GM10248 (cell line): ENCODE measurements at regions of chrX and their contacts with region 1.

Region 1: DNA sequence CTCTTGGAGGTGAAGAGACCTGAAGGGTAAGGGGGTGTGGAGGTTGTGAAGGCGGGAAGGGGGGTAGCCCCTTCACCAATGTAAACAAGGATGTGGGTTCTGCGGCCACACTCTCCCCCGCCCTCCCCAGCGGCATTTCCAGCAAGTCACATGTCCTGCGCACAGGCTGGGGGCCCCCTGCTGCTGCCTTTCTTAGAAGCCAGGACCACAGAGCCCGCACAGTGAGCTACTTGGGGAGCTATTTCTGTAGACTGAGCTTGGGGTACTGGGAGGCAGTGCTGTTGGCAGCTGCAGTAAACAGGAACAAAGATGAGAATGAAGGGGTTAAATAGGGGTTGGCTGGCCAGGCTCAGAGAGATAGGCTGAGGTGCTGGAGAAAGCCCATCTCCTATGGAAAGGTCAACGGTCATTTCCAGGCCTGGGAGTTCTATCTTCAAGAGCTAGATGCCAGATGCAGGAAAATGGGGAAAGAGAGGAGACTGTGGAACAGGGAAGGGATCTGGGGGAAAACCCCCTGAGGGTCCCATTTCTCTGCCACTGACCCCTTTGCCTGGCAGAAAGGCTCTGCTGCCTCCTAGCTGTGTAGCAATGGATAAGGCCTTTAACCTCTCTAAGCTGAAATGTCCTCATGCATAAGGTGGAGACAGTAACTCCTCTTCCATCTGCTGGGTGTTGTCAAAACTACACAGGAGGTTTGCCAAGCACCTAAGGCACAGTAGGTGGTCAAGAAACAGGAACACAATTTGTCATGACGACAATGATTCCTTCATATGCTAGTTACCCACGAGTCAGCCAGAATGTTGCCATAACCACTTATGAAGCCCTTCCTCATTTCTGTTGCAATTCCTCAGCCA is 18.5 kb upstream of the PIM2 start:
- DNase-seq: peak; percentile 70
- CTCF ChIP-seq: peak; percentile 28

Region 2: GRCh38 chrX:47991263-47992092 is 945.8 kb before region 1 on chrX:
- CTCF ChIA-PET with region 1: no interaction called
- POLR2A ChIA-PET with region 1: no interaction called
- DNase-seq: no peak
- CTCF ChIP-seq: no peak

Region 3: GRCh38 chrX:48911412-48912182 is 25.7 kb before region 1 on chrX and contains the start of gene SLC35A2:
- CTCF ChIA-PET with region 1: interaction called, 15 read pairs
- POLR2A ChIA-PET with region 1: interaction called, 33 read pairs
- DNase-seq: peak; percentile 77
- CTCF ChIP-seq: no peak

Region 4: GRCh38 chrX:48917139-48918001 is 19.9 kb before region 1 on chrX:
- CTCF ChIA-PET with region 1: interaction called, 15 read pairs
- POLR2A ChIA-PET with region 1: interaction called, 33 read pairs
- DNase-seq: peak; percentile 82
- CTCF ChIP-seq: peak; percentile 59

Region 5: GRCh38 chrX:48957827-48958634 is 20.8 kb after region 1 on chrX:
- CTCF ChIA-PET with region 1: interaction called, 19 read pairs
- POLR2A ChIA-PET with region 1: interaction called, 12 read pairs
- DNase-seq: peak; percentile 90
- CTCF ChIP-seq: no peak

Region 6: GRCh38 chrX:49100704-49101628 is 163.7 kb after region 1 on chrX:
- CTCF ChIA-PET with region 1: no interaction called
- POLR2A ChIA-PET with region 1: no interaction called
- DNase-seq: peak; percentile 97
- CTCF ChIP-seq: no peak